Ovary (tissue), 10 donors: ENCODE measurements at regions of chr2 and their contacts with region 1.

Region 1: GRCh38 chr2:237413777-237414661 is at the start of gene COL6A3:
- DNase-seq: peak; percentile 89 to 94 (median 90)
- H3K4me3 ChIP-seq: peak within 1 kb of the TSS; percentile 55
- H3K27ac ChIP-seq: peak within 1 kb of the TSS; percentile 88
- H3K4me1 ChIP-seq: peaks cover 3% of the 10 kb centered on the region
- H3K27me3 ChIP-seq: no peaks in the 10 kb centered on the region
- CTCF ChIP-seq: no peak
- EP300 ChIP-seq: no peak
- POLR2A ChIP-seq: peak; percentile 35
- total RNA-seq, gene COL6A3: 113 to 520 (median 431) TPM

Region 2: GRCh38 chr2:237092920-237093781 is 320.9 kb before region 1 on chr2:
- intact Hi-C with region 1: loop called in 1 of 4 experiments (anchors 5 kb)
- DNase-seq: peak in 4 of 5 donors; percentile 49 to 65 (median 58)
- H3K4me3 ChIP-seq: no peak overlapping the region
- H3K27ac ChIP-seq: no peak overlapping the region
- H3K4me1 ChIP-seq: peaks cover 6% of the 10 kb centered on the region
- H3K27me3 ChIP-seq: no peaks in the 10 kb centered on the region
- CTCF ChIP-seq: peak; percentile 47 to 83 (median 55)
- EP300 ChIP-seq: no peak
- POLR2A ChIP-seq: no peak

Region 3: GRCh38 chr2:237171396-237171795 is 242.6 kb before region 1 on chr2:
- intact Hi-C with region 1: loop called in 2 of 4 experiments (anchors 5 kb)
- DNase-seq: peak; percentile 56 to 71 (median 60)
- H3K4me3 ChIP-seq: no peak overlapping the region
- H3K27ac ChIP-seq: peak overlapping the region; percentile 18 to 78
- H3K4me1 ChIP-seq: peaks cover 5% of the 10 kb centered on the region
- H3K27me3 ChIP-seq: no peaks in the 10 kb centered on the region
- CTCF ChIP-seq: peak in 2 of 3 donors; percentile 40 to 57
- EP300 ChIP-seq: no peak
- POLR2A ChIP-seq: no peak

Region 4: GRCh38 chr2:237304763-237305514 is 109.1 kb before region 1 on chr2:
- intact Hi-C with region 1: loop called in 1 of 4 experiments (anchors 5 kb)
- DNase-seq: peak in 1 of 5 donors; percentile 63
- H3K4me3 ChIP-seq: no peak overlapping the region
- H3K27ac ChIP-seq: no peak overlapping the region
- H3K4me1 ChIP-seq: peaks cover 23% of the 10 kb centered on the region
- H3K27me3 ChIP-seq: no peaks in the 10 kb centered on the region
- CTCF ChIP-seq: no peak
- EP300 ChIP-seq: no peak
- POLR2A ChIP-seq: no peak

Region 5: DNA sequence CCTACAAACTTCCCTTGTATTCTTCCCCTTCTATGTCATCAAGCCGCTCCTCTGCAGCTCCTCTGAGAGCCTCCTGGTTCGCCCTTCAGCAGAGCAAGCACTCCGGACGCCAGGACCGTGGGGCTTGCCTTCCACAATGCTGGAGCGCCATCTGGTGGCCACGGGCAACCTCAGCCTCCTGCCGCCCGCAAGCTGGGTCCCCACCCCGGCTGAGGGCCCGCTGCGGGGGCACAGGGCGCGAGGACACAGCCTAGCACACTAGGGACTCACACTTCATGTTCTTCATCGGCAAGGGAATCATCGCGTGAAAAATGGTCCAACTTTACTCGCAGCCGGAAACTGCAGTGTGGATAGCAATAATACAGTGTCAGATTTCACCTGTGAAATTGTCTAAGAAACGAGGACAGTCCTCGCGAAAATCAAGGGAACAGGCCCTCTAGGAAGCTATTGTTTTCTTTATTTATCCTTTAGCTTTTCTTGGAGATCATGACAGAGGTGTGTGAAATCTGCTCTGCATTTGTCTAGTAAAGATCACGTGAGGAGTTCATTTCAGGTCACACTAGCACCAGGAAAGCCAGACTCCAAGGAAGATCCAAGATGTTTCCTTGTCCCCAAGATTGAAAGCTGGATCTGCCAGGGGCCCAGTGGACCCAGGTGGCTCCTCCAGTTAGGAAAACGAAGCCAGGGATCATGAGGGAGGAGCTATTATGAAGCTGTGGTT is 158.2 kb after region 1 on chr2:
- intact Hi-C with region 1: loop called in 2 of 4 experiments (anchors 10 kb)
- DNase-seq: peak; percentile 93 to 97 (median 94)
- H3K4me3 ChIP-seq: no peak overlapping the region
- H3K27ac ChIP-seq: no peak overlapping the region
- H3K4me1 ChIP-seq: peaks cover 2% of the 10 kb centered on the region
- H3K27me3 ChIP-seq: no peaks in the 10 kb centered on the region
- CTCF ChIP-seq: peak; percentile 97 to 100 (median 100)
- EP300 ChIP-seq: no peak
- POLR2A ChIP-seq: peak; percentile 32